Pancreas (tissue), 10 donors: ENCODE measurements at regions of chr9 and their contacts with region 1.

Region 1: GRCh38 chr9:107732781-107733522 is 243.4 kb upstream of the KLF4 start:
- DNase-seq: peak in 3 of 6 donors; percentile 22 to 50 (median 46)
- ATAC-seq: peak; percentile 58 to 85 (median 74)
- H3K4me3 ChIP-seq: no peak overlapping the region
- H3K27ac ChIP-seq: peak overlapping the region in 3 of 4 donors; percentile 21 to 38 (median 29)
- H3K4me1 ChIP-seq: peaks cover 0 to 4% (median 0%) of the 10 kb centered on the region in 3 donors
- H3K27me3 ChIP-seq: no peaks in the 10 kb centered on the region
- CTCF ChIP-seq: no peak

Region 2: DNA sequence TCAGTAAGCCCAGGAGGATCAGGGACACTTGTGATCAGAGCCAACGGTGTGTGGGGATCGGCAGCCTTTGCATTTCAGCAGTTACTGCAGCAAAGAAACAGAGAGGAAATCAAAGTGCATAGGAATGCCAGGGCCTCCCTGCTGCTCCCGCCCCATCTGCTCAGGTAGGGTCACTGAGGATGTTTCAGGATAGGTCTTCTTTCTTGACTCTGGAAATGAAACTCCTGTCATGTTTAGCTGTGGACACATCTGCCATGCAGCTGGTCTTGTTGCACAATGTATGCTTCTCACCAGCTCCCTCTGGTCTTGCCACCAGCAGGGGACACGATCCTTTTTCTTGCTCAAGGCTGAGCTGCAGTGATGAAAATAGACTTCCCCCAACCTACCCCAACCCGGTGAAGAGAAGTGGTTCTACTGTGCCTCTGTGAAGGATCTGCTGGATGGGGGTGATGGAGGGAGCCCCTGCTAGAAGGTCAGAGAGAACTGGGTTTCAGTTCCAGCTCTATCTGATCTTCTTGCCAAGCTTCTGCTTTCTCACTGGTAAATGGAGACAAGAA is 58.2 kb before region 1 on chr9:
- intact Hi-C with region 1: loop called in 1 of 3 experiments (anchors 10 kb)
- DNase-seq: no peak
- ATAC-seq: peak in 2 of 4 donors; percentile 59 to 74
- H3K4me3 ChIP-seq: no peak overlapping the region
- H3K27ac ChIP-seq: no peak overlapping the region
- H3K4me1 ChIP-seq: no peaks in the 10 kb centered on the region
- H3K27me3 ChIP-seq: no peaks in the 10 kb centered on the region
- CTCF ChIP-seq: no peak

Region 3: GRCh38 chr9:108257382-108257781 is 524.4 kb after region 1 on chr9:
- intact Hi-C with region 1: no loop called
- DNase-seq: no peak
- ATAC-seq: no peak
- H3K4me3 ChIP-seq: no peak overlapping the region
- H3K27ac ChIP-seq: no peak overlapping the region
- H3K4me1 ChIP-seq: no peaks in the 10 kb centered on the region
- H3K27me3 ChIP-seq: no peaks in the 10 kb centered on the region
- CTCF ChIP-seq: no peak